CD8-positive, alpha-beta T cell (primary cell): ENCODE measurements at regions of chr2 and their contacts with region 1.

Region 1: DNA sequence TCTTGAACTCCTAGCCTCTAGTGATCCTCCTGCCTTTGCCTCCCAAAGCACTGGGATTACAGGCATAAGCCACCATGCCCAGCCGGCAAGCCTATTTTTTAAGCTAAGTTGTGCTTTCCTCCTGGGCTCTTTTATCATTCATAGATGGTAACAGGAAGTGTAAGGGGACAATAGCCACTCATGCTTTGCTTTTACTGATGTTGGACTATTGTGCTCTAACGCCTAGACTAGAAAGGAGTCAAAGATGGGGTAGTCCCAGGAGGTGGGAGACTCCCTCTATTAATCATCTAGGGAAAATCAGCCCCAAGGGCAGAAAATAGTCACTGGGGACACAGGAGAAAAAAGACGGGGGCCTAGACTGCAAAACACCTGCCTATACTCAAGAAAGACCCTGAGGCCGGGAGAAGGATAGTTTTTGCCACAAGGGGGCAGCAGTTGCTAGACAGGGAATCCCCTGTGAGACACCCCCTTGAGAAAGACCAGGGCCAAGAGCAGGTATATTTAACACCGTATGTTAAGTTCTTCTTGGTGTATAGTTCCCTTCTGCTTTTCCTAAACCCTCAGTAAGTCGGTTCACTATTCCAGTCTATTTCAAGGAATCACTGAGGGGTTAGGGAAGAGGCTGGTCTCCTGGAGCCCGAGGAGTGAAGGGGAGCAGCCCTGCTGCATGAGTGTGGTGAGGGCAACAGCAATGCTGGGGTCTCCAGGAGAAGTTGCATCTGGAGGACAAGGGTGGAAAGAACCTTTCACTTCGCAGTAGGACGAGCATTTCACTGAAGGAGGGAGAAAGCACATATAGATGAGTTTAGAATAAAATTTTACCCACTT is 2.1 kb upstream of the CXCR1 start:
- DNase-seq: peak; percentile 41 to 84 (median 75)
- ATAC-seq: peak; percentile 80
- H3K4me3 ChIP-seq: no peak overlapping the region
- H3K4me3 Mint-ChIP-seq: no peak overlapping the region
- H3K27ac ChIP-seq: no peak overlapping the region
- H3K27ac Mint-ChIP-seq: no peak overlapping the region
- H3K4me1 ChIP-seq: peaks cover 27% of the 10 kb centered on the region
- H3K4me1 Mint-ChIP-seq: peaks cover 35% of the 10 kb centered on the region
- H3K27me3 ChIP-seq: no peaks in the 10 kb centered on the region
- H3K27me3 Mint-ChIP-seq: peaks cover 2% of the 10 kb centered on the region
- CTCF ChIP-seq: peak; percentile 84

Region 2: DNA sequence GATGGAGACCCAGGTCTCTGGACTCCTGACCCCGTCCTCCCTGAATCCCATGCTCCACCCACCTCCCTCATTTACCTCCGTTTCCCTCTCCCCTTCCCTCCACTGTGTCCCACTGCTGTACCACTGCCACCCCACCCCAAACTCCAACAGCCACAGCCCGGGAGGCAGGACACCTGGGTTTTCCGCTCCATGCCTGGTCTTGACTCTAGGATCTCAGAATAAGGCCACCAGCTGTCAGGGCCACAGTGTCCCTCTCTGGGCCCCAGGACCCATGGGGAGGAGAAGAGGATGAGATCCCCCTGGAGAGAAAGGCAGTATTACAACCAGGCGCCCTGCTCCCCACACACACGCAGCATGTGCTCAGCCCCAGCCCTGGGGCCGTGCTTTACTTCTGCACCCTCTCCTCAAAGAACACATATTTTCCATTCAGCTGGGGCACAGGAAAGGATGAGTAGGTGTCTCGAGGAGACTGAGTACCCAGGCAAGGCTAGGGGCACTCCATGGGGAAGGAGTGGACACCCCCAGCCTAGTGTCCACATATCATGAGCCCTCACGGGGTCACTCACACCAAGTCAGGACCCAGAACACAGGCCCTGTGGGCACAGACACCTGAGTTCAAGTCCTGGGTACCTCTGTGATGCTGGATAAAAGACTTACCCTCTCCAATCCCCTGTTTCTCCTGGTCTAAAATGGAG is 99.1 kb before region 1 on chr2:
- CTCF ChIA-PET with region 1: no interaction called
- POLR2A ChIA-PET with region 1: no interaction called
- intact Hi-C with region 1: no loop called
- DNase-seq: no peak
- ATAC-seq: no peak
- H3K4me3 ChIP-seq: no peak overlapping the region
- H3K4me3 Mint-ChIP-seq: peak overlapping the region; percentile 47
- H3K27ac ChIP-seq: no peak overlapping the region
- H3K27ac Mint-ChIP-seq: no peak overlapping the region
- H3K4me1 ChIP-seq: peaks cover 4% of the 10 kb centered on the region
- H3K4me1 Mint-ChIP-seq: peaks cover 8% of the 10 kb centered on the region
- H3K27me3 ChIP-seq: peaks cover 0 to 4% of the 10 kb centered on the region in 2 experiments
- H3K27me3 Mint-ChIP-seq: peaks cover 26% of the 10 kb centered on the region
- CTCF ChIP-seq: no peak

Region 3: GRCh38 chr2:218155953-218156479 is 12.8 kb before region 1 on chr2:
- CTCF ChIA-PET with region 1: interaction called, 14 read pairs
- POLR2A ChIA-PET with region 1: no interaction called
- intact Hi-C with region 1: no loop called
- DNase-seq: no peak
- ATAC-seq: no peak
- H3K4me3 ChIP-seq: no peak overlapping the region
- H3K4me3 Mint-ChIP-seq: no peak overlapping the region
- H3K27ac ChIP-seq: no peak overlapping the region
- H3K27ac Mint-ChIP-seq: no peak overlapping the region
- H3K4me1 ChIP-seq: no peaks in the 10 kb centered on the region
- H3K4me1 Mint-ChIP-seq: no peaks in the 10 kb centered on the region
- H3K27me3 ChIP-seq: no peaks in the 10 kb centered on the region
- H3K27me3 Mint-ChIP-seq: no peaks in the 10 kb centered on the region
- CTCF ChIP-seq: no peak